T-cell (primary cell): ENCODE measurements at regions of chr1 and their contacts with region 1.

Region 1: GRCh38 chr1:202274611-202275010 is 67.1 kb downstream of the UBE2T start:
- DNase-seq: peak in 22 of 35 experiments; percentile 8 to 58 (median 22)
- ATAC-seq: peak in 3 of 4 experiments; percentile 50 to 60 (median 56)
- H3K4me3 ChIP-seq: no peak overlapping the region
- H3K4me3 Mint-ChIP-seq: no peak overlapping the region
- H3K27ac ChIP-seq: no peak overlapping the region
- H3K27ac Mint-ChIP-seq: no peak overlapping the region
- H3K4me1 ChIP-seq: no peaks in the 10 kb centered on the region
- H3K4me1 Mint-ChIP-seq: no peaks in the 10 kb centered on the region
- H3K27me3 ChIP-seq: peaks cover 5% of the 10 kb centered on the region in 2 experiments
- H3K27me3 Mint-ChIP-seq: peaks cover 9 to 10% of the 10 kb centered on the region in 2 donors

Region 2: GRCh38 chr1:202315576-202316168 is 41.1 kb after region 1 on chr1:
- CTCF ChIA-PET with region 1: interaction called, 8 to 10 read pairs
- POLR2A ChIA-PET with region 1: no interaction called
- DNase-seq: peak; percentile 37 to 84 (median 68)
- ATAC-seq: peak; percentile 83 to 87 (median 85)
- H3K4me3 ChIP-seq: no peak overlapping the region
- H3K4me3 Mint-ChIP-seq: no peak overlapping the region
- H3K27ac ChIP-seq: no peak overlapping the region
- H3K27ac Mint-ChIP-seq: no peak overlapping the region
- H3K4me1 ChIP-seq: peaks cover 0 to 7% of the 10 kb centered on the region in 2 experiments
- H3K4me1 Mint-ChIP-seq: peaks cover 0 to 1% (median 0%) of the 10 kb centered on the region in 3 donors
- H3K27me3 ChIP-seq: peaks cover 0 to 8% of the 10 kb centered on the region in 2 experiments
- H3K27me3 Mint-ChIP-seq: peaks cover 7 to 10% of the 10 kb centered on the region in 2 donors